A549 (cell line): ENCODE measurements at regions of chr5 and their contacts with region 1.

Region 1: DNA sequence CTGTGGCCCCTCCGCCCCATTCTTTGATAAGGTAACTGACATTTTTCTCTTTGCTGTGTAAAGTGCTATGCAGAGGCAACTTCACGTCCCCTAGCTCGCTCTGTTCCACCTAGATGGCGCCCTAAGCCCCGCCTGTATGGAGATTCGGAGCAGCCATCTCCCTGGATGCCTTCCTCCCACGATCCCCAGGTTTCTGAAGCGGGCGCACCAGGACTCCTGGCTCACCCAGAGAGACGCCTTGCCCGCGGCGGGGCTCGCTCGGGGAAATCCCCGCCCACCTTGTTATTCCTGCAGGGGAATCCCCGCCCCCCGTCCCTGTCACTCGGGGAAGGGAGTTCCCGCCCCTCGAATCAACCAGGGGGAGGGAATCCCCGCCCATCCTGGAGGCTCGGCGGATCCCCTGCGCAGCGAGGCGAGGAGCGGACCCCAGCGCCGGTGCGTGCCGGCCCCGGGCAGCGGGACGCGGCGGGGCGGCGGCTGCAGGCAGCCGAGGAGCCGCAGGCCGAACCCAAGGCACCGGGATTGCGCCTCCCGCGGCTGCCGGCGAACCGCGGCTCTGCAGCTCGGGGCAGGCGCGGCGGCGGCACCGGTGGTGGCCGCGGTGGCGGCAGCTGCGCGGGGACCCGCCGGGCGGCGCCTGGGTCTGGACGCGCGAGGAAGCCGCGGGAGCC is at the start of gene PDZD2:
- DNase-seq: peak; percentile 65 to 76
- ATAC-seq: peak; percentile 88 to 94
- H3K4me3 ChIP-seq: peak within 1 kb of the TSS; percentile 56
- H3K27ac ChIP-seq: peak within 1 kb of the TSS in 1 of 2 experiments; percentile 42; a peak in 3 of 6 replicates
- H3K4me1 ChIP-seq: peaks cover 7% of the 10 kb centered on the region; the same call in 2 of the 3 replicates
- CTCF ChIP-seq: peak; percentile 53
- EP300 ChIP-seq: no peak
- POLR2A ChIP-seq: no peak
- RAD21 ChIP-seq: peak; percentile 31; a peak in 2 of 5 replicates
- polyA plus RNA-seq, gene PDZD2: 0.09 and 0.12 TPM in 2 replicates

Region 2: GRCh38 chr5:31626156-31626555 is 12.7 kb before region 1 on chr5:
- CTCF ChIA-PET with region 1: interaction called, 16 read pairs
- POLR2A ChIA-PET with region 1: no interaction called
- DNase-seq: no peak
- ATAC-seq: no peak
- H3K4me3 ChIP-seq: no peak overlapping the region
- H3K27ac ChIP-seq: no peak overlapping the region
- H3K4me1 ChIP-seq: no peaks in the 10 kb centered on the region
- CTCF ChIP-seq: no peak
- EP300 ChIP-seq: no peak
- POLR2A ChIP-seq: no peak
- RAD21 ChIP-seq: no peak

Region 3: DNA sequence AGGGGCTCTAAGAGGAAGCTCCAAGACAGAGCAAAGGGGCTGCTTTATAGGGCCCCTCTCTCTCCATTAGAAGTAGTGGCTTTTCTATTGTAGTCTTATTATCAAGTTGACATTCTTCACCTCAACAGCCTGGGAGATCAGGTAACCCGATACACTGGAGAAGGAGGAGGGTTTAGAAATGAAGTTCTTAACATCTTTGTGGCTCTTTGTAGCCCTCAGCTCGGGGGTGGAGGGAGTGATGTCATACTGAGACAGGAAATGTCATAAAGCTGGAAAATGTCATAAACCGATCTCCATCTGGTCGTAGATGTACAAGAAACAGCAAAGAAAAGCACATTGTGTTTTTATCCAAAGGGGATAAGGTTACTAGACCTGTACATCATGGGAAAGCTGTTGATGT is 17.9 kb after region 1 on chr5:
- CTCF ChIA-PET with region 1: interaction called, 11 read pairs
- POLR2A ChIA-PET with region 1: no interaction called
- DNase-seq: no peak
- ATAC-seq: no peak
- H3K4me3 ChIP-seq: no peak overlapping the region
- H3K27ac ChIP-seq: no peak overlapping the region
- H3K4me1 ChIP-seq: no peaks in the 10 kb centered on the region
- CTCF ChIP-seq: no peak
- EP300 ChIP-seq: no peak
- POLR2A ChIP-seq: no peak
- RAD21 ChIP-seq: no peak

Region 4: GRCh38 chr5:31825518-31826068 is 186.7 kb after region 1 on chr5:
- CTCF ChIA-PET with region 1: no interaction called
- POLR2A ChIA-PET with region 1: no interaction called
- DNase-seq: peak; percentile 36 to 63
- ATAC-seq: peak; percentile 94 to 97
- H3K4me3 ChIP-seq: no peak overlapping the region
- H3K27ac ChIP-seq: peak overlapping the region in 1 of 2 experiments; percentile 21; a peak in 1 of 6 replicates
- H3K4me1 ChIP-seq: peaks cover 5% of the 10 kb centered on the region; the same call in 1 of the 3 replicates
- CTCF ChIP-seq: peak; percentile 88
- EP300 ChIP-seq: no peak
- POLR2A ChIP-seq: no peak
- RAD21 ChIP-seq: peak; percentile 85 to 91